CD8-positive, alpha-beta T cell (primary cell): ENCODE measurements at regions of chr17 and their contacts with region 1.

Region 1: GRCh38 chr17:31321481-31321880 is at the start of gene EVI2A:
- DNase-seq: peak; percentile 40 to 96 (median 72)
- ATAC-seq: peak; percentile 86
- H3K4me3 ChIP-seq: peak within 1 kb of the TSS; percentile 70 to 83
- H3K4me3 Mint-ChIP-seq: peak within 1 kb of the TSS; percentile 84
- H3K27ac ChIP-seq: peak within 1 kb of the TSS; percentile 79 to 89
- H3K27ac Mint-ChIP-seq: peak within 1 kb of the TSS; percentile 96
- H3K4me1 ChIP-seq: peaks cover 16% of the 10 kb centered on the region
- H3K4me1 Mint-ChIP-seq: peaks cover 30% of the 10 kb centered on the region
- H3K27me3 ChIP-seq: no peaks in the 10 kb centered on the region
- H3K27me3 Mint-ChIP-seq: no peaks in the 10 kb centered on the region
- CTCF ChIP-seq: no peak
- total RNA-seq, gene EVI2A: 43.3 to 44.4 TPM

Region 2: GRCh38 chr17:30808785-30809286 is 512.6 kb before region 1 on chr17:
- CTCF ChIA-PET with region 1: no interaction called
- POLR2A ChIA-PET with region 1: no interaction called
- intact Hi-C with region 1: loop called in 1 of 2 experiments (anchors 5 kb)
- DNase-seq: peak in 8 of 9 experiments; percentile 1 to 88 (median 48)
- ATAC-seq: peak; percentile 85
- H3K4me3 ChIP-seq: peak overlapping the region; percentile 26 to 48
- H3K4me3 Mint-ChIP-seq: peak overlapping the region; percentile 83
- H3K27ac ChIP-seq: peak overlapping the region; percentile 53 to 89
- H3K27ac Mint-ChIP-seq: peak overlapping the region; percentile 99
- H3K4me1 ChIP-seq: peaks cover 63% of the 10 kb centered on the region
- H3K4me1 Mint-ChIP-seq: peaks cover 70% of the 10 kb centered on the region
- H3K27me3 ChIP-seq: no peaks in the 10 kb centered on the region
- H3K27me3 Mint-ChIP-seq: no peaks in the 10 kb centered on the region
- CTCF ChIP-seq: no peak

Region 3: GRCh38 chr17:31269578-31269983 is 51.9 kb before region 1 on chr17:
- CTCF ChIA-PET with region 1: interaction called, 3 read pairs
- POLR2A ChIA-PET with region 1: no interaction called
- intact Hi-C with region 1: loop called in 1 of 2 experiments (anchors 5 kb)
- DNase-seq: no peak
- ATAC-seq: no peak
- H3K4me3 ChIP-seq: no peak overlapping the region
- H3K4me3 Mint-ChIP-seq: no peak overlapping the region
- H3K27ac ChIP-seq: no peak overlapping the region
- H3K27ac Mint-ChIP-seq: no peak overlapping the region
- H3K4me1 ChIP-seq: no peaks in the 10 kb centered on the region
- H3K4me1 Mint-ChIP-seq: no peaks in the 10 kb centered on the region
- H3K27me3 ChIP-seq: no peaks in the 10 kb centered on the region
- H3K27me3 Mint-ChIP-seq: no peaks in the 10 kb centered on the region
- CTCF ChIP-seq: no peak

Region 4: GRCh38 chr17:31291820-31292219 is 29.7 kb before region 1 on chr17:
- CTCF ChIA-PET with region 1: no interaction called
- POLR2A ChIA-PET with region 1: no interaction called
- intact Hi-C with region 1: no loop called
- DNase-seq: no peak
- ATAC-seq: no peak
- H3K4me3 ChIP-seq: no peak overlapping the region
- H3K4me3 Mint-ChIP-seq: no peak overlapping the region
- H3K27ac ChIP-seq: no peak overlapping the region
- H3K27ac Mint-ChIP-seq: no peak overlapping the region
- H3K4me1 ChIP-seq: peaks cover 8% of the 10 kb centered on the region
- H3K4me1 Mint-ChIP-seq: peaks cover 20% of the 10 kb centered on the region
- H3K27me3 ChIP-seq: no peaks in the 10 kb centered on the region
- H3K27me3 Mint-ChIP-seq: no peaks in the 10 kb centered on the region
- CTCF ChIP-seq: no peak

Region 5: DNA sequence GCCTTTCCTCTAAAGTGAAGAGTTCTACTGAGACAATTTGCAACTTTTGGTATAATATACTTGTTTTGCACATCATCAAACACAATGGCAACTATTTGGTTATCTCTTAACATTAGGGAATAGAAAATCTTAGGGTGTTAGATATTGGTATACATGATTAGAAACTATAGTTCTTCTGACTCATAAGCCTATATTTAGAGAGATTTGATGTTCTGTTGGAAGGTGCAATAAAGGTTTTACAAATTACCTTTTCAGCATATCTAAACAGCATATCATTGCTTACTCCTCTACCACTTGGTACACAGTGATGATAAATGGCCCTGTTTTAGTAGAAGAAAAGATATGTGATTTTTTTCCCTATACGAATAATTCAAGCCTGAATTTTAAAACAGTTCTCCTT is 13.8 kb before region 1 on chr17:
- CTCF ChIA-PET with region 1: interaction called, 6 read pairs
- POLR2A ChIA-PET with region 1: interaction called, 27 read pairs
- intact Hi-C with region 1: loop called (anchors 1 kb)
- DNase-seq: no peak
- ATAC-seq: no peak
- H3K4me3 ChIP-seq: peak overlapping the region in 1 of 2 experiments; percentile 25
- H3K4me3 Mint-ChIP-seq: peak overlapping the region; percentile 88
- H3K27ac ChIP-seq: peak overlapping the region; percentile 69 to 89
- H3K27ac Mint-ChIP-seq: peak overlapping the region; percentile 98
- H3K4me1 ChIP-seq: peaks cover 43% of the 10 kb centered on the region
- H3K4me1 Mint-ChIP-seq: peaks cover 69% of the 10 kb centered on the region
- H3K27me3 ChIP-seq: no peaks in the 10 kb centered on the region
- H3K27me3 Mint-ChIP-seq: no peaks in the 10 kb centered on the region
- CTCF ChIP-seq: no peak

Region 6: DNA sequence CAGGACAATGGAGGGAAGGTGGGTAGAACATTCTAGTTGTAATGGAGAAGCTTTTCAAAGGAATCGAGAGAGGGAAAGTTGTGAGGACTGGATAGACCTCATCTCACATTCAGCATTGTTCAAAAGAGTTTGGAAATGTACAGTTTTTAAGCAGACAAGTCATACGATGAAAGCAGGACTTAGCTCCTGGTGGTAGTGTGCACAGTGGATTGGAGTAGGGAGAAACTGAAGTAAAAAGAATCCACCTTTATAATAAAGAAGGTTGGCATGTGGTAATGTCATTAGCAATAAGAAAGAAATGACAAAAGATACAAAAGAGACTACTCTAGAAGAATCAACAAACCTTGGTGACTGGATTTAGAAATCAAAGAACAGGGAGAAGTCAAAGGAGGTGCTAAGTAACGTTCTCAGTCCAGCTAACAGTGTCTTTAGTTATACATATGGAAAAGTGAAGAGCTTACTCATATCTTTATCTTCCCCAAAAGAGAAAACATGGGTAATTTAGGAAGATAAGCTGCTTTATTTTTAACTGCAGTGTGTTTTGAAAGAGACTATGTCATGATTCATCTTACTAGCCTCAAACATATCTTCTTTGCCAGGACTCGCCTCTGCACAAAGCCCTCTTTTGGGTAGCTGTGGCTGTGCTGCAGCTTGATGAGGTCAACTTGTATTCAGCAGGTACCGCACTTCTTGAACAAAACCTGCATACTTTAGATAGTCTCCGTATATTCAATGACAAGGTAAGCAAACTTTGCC is 18.6 kb after region 1 on chr17:
- CTCF ChIA-PET with region 1: no interaction called
- POLR2A ChIA-PET with region 1: no interaction called
- intact Hi-C with region 1: loop called in 1 of 2 experiments (anchors 2 kb)
- DNase-seq: no peak
- ATAC-seq: no peak
- H3K4me3 ChIP-seq: no peak overlapping the region
- H3K4me3 Mint-ChIP-seq: no peak overlapping the region
- H3K27ac ChIP-seq: no peak overlapping the region
- H3K27ac Mint-ChIP-seq: no peak overlapping the region
- H3K4me1 ChIP-seq: no peaks in the 10 kb centered on the region
- H3K4me1 Mint-ChIP-seq: no peaks in the 10 kb centered on the region
- H3K27me3 ChIP-seq: no peaks in the 10 kb centered on the region
- H3K27me3 Mint-ChIP-seq: no peaks in the 10 kb centered on the region
- CTCF ChIP-seq: no peak

Region 7: GRCh38 chr17:31388770-31389661 is 67.5 kb after region 1 on chr17:
- CTCF ChIA-PET with region 1: no interaction called
- POLR2A ChIA-PET with region 1: no interaction called
- intact Hi-C with region 1: no loop called
- DNase-seq: peak in 8 of 9 experiments; percentile 16 to 70 (median 52)
- ATAC-seq: peak; percentile 71
- H3K4me3 ChIP-seq: no peak overlapping the region
- H3K4me3 Mint-ChIP-seq: no peak overlapping the region
- H3K27ac ChIP-seq: no peak overlapping the region
- H3K27ac Mint-ChIP-seq: no peak overlapping the region
- H3K4me1 ChIP-seq: peaks cover 11% of the 10 kb centered on the region
- H3K4me1 Mint-ChIP-seq: peaks cover 9% of the 10 kb centered on the region
- H3K27me3 ChIP-seq: peaks cover 8 to 10% of the 10 kb centered on the region in 2 experiments
- H3K27me3 Mint-ChIP-seq: peaks cover 30% of the 10 kb centered on the region
- CTCF ChIP-seq: peak; percentile 58

Region 8: GRCh38 chr17:31494259-31495021 is 173.0 kb after region 1 on chr17:
- CTCF ChIA-PET with region 1: no interaction called
- POLR2A ChIA-PET with region 1: no interaction called
- intact Hi-C with region 1: loop called (anchors 2 to 5 kb)
- DNase-seq: peak in 8 of 9 experiments; percentile 53 to 91 (median 72)
- ATAC-seq: peak; percentile 81
- H3K4me3 ChIP-seq: peak overlapping the region in 1 of 2 experiments; percentile 20
- H3K4me3 Mint-ChIP-seq: peak overlapping the region; percentile 76
- H3K27ac ChIP-seq: peak overlapping the region; percentile 76 to 89
- H3K27ac Mint-ChIP-seq: peak overlapping the region; percentile 97
- H3K4me1 ChIP-seq: peaks cover 97% of the 10 kb centered on the region
- H3K4me1 Mint-ChIP-seq: peaks cover 97% of the 10 kb centered on the region
- H3K27me3 ChIP-seq: no peaks in the 10 kb centered on the region
- H3K27me3 Mint-ChIP-seq: no peaks in the 10 kb centered on the region
- CTCF ChIP-seq: no peak